ENCODE measurements at regions of chrX and their contacts with region 1.

Region 1: DNA sequence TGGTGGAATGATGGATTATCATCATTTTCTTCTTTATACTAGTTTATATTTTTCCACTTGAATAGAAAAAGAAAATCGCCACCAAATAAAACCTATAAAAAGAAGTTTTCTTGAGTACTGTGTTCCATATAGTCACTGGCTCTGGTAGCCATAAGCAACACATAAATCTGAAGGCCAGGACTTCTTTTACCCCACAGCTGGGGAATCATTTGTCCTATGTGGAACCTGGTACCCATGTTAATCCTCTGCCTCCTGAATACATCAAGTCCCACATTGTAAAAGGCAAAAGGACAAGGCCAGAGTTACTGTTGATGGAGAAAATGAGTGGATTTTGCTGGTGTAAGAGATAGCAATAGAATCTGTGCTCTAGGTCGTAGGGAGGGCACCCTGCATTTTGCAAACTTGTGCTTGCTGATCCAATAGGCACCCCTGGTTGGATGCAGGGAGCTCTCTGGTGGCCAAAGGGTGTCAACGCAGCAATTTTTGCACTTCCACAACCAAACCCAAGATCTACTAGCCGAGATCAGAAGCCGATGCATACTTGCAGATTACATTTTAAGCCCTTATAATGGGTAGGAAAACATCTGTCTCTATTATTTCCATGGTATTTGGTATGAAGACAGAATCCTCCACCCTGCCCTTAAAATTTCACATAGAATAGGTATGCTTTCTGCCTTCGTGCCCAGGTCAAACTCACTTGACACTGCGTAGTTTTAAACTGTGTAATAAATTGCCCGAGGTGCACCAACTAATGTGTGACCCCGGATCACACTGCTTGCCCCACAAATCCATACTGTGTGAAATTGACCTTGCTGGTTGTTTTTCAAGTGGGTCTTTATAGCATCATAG is 146.2 kb upstream of the SCML1 start:
- DNase-seq: peak; percentile 56
- ATAC-seq: peak; percentile 81
- H3K4me3 Mint-ChIP-seq: no peak overlapping the region
- H3K27ac Mint-ChIP-seq: peak overlapping the region; percentile 25
- H3K4me1 Mint-ChIP-seq: peaks cover 16% of the 10 kb centered on the region
- H3K27me3 Mint-ChIP-seq: peaks cover 6% of the 10 kb centered on the region
- CTCF ChIP-seq: peak; percentile 52

Region 2: DNA sequence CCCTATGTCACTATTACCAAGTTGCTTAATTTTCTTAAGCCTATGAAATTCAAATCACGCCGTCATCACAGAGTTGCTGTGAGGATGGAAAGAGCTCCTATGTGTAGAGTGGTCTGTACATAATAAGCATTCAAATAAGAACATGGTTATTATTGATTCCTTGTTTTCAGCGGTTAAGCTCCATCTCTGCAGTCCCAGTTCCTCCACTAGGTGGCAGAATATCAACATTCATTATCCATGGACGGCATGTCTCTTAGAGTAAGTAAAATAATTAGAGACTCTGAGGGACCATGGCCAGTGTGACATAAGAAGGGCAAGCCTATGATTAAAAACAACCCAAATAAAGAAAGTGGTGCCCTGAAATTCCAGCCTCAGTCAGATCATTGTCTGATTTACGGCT is 348.6 kb before region 1 on chrX:
- CTCF ChIA-PET with region 1: interaction called, 5 read pairs
- POLR2A ChIA-PET with region 1: no interaction called
- intact Hi-C with region 1: loop called (anchors 5 kb)
- DNase-seq: peak; percentile 49
- ATAC-seq: no peak
- H3K4me3 Mint-ChIP-seq: no peak overlapping the region
- H3K27ac Mint-ChIP-seq: no peak overlapping the region
- H3K4me1 Mint-ChIP-seq: no peaks in the 10 kb centered on the region
- H3K27me3 Mint-ChIP-seq: no peaks in the 10 kb centered on the region
- CTCF ChIP-seq: peak; percentile 40

Region 3: GRCh38 chrX:17535229-17535628 is 55.9 kb before region 1 on chrX:
- CTCF ChIA-PET with region 1: interaction called, 6 read pairs
- POLR2A ChIA-PET with region 1: no interaction called
- intact Hi-C with region 1: loop called (anchors 5 kb)
- DNase-seq: peak; percentile 62
- ATAC-seq: peak; percentile 76
- H3K4me3 Mint-ChIP-seq: no peak overlapping the region
- H3K27ac Mint-ChIP-seq: no peak overlapping the region
- H3K4me1 Mint-ChIP-seq: peaks cover 14% of the 10 kb centered on the region
- H3K27me3 Mint-ChIP-seq: no peaks in the 10 kb centered on the region
- CTCF ChIP-seq: no peak

Region 4: GRCh38 chrX:17547658-17548057 is 43.5 kb before region 1 on chrX:
- CTCF ChIA-PET with region 1: no interaction called
- POLR2A ChIA-PET with region 1: no interaction called
- intact Hi-C with region 1: loop called (anchors 5 kb)
- DNase-seq: no peak
- ATAC-seq: no peak
- H3K4me3 Mint-ChIP-seq: no peak overlapping the region
- H3K27ac Mint-ChIP-seq: no peak overlapping the region
- H3K4me1 Mint-ChIP-seq: peaks cover 12% of the 10 kb centered on the region
- H3K27me3 Mint-ChIP-seq: peaks cover 2% of the 10 kb centered on the region
- CTCF ChIP-seq: no peak

Region 5: GRCh38 chrX:17802756-17803155 is 211.6 kb after region 1 on chrX:
- CTCF ChIA-PET with region 1: no interaction called
- POLR2A ChIA-PET with region 1: no interaction called
- intact Hi-C with region 1: no loop called
- DNase-seq: no peak
- ATAC-seq: no peak
- H3K4me3 Mint-ChIP-seq: no peak overlapping the region
- H3K27ac Mint-ChIP-seq: no peak overlapping the region
- H3K4me1 Mint-ChIP-seq: peaks cover 4% of the 10 kb centered on the region
- H3K27me3 Mint-ChIP-seq: no peaks in the 10 kb centered on the region
- CTCF ChIP-seq: no peak

Measured in activated CD8-positive, alpha-beta T cell treated with anti-CD3 and anti-CD28 coated beads for 36 hours (primary cell).